Activated naive CD4-positive, alpha-beta T cell treated with anti-CD3 and anti-CD28 coated beads for 36 hours (primary cell): ENCODE measurements at regions of chr12 and their contacts with region 1.

Region 1: GRCh38 chr12:100951756-100952155 is 157.2 kb downstream of the ANO4 start:
- DNase-seq: no peak
- H3K4me3 Mint-ChIP-seq: no peak overlapping the region
- H3K27ac Mint-ChIP-seq: no peak overlapping the region
- H3K4me1 Mint-ChIP-seq: no peaks in the 10 kb centered on the region
- H3K27me3 Mint-ChIP-seq: peaks cover 2% of the 10 kb centered on the region

Region 2: DNA sequence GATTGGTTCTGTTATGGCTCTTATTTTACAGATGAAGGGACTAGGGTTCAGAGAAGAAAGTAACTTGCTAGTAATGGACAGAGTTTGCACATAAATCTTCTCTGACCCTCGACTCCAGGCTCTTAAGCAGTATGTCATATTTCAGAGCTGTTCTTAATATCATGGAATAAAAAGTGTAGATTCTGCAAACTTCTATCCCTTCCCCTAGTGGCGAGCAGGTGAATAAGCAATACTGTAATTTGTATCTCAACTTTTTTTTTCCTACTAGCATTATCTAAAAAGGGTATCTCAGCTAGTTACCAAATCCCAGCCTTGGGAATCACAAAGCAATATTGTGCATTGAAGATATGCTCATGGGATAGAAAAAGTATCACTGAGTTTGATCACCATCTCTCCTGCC is 74.0 kb before region 1 on chr12:
- CTCF ChIA-PET with region 1: no interaction called
- intact Hi-C with region 1: no loop called
- DNase-seq: no peak
- H3K4me3 Mint-ChIP-seq: no peak overlapping the region
- H3K27ac Mint-ChIP-seq: no peak overlapping the region
- H3K4me1 Mint-ChIP-seq: no peaks in the 10 kb centered on the region
- H3K27me3 Mint-ChIP-seq: peaks cover 4% of the 10 kb centered on the region

Region 3: DNA sequence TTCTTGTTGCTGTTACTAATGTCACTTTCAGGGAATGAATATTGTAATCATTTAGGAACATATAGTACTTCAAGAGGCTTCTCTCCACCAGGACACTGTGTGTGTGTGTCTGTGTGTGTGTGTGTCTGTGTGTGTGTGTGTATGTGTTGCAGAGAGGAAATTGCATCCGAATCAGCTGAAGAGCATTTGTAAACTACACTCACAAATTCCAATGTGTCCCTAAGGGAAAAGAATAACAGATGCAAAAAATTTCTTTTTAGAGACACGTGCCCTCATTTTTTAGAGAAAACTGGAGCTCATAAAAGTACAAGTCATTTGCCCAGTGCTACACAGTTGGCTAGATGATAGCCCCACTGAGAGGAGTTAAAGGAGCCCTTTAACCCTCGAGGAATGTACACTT is 11.6 kb after region 1 on chr12:
- CTCF ChIA-PET with region 1: interaction called, 3 read pairs
- intact Hi-C with region 1: loop called (anchors 1 kb)
- DNase-seq: no peak
- H3K4me3 Mint-ChIP-seq: no peak overlapping the region
- H3K27ac Mint-ChIP-seq: no peak overlapping the region
- H3K4me1 Mint-ChIP-seq: no peaks in the 10 kb centered on the region
- H3K27me3 Mint-ChIP-seq: peaks cover 3% of the 10 kb centered on the region